Panc1 (cell line): ENCODE measurements at regions of chr9 and their contacts with region 1.

Region 1: GRCh38 chr9:71368157-71368556 is 246.7 kb upstream of the TRPM3 start:
- DNase-seq: no peak
- ATAC-seq: no peak
- H3K4me3 ChIP-seq: no peak overlapping the region
- H3K27ac ChIP-seq: no peak overlapping the region
- H3K4me1 ChIP-seq: no peaks in the 10 kb centered on the region
- H3K27me3 ChIP-seq: no peaks in the 10 kb centered on the region
- CTCF ChIP-seq: no peak

Region 2: GRCh38 chr9:71446473-71447411 is 78.6 kb after region 1 on chr9:
- CTCF ChIA-PET with region 1: no interaction called
- POLR2A ChIA-PET with region 1: no interaction called
- in situ Hi-C with region 1: no loop called
- intact Hi-C with region 1: loop called (anchors 10 kb)
- DNase-seq: no peak
- ATAC-seq: no peak
- H3K4me3 ChIP-seq: no peak overlapping the region; a peak in 1 of 4 replicates
- H3K27ac ChIP-seq: no peak overlapping the region
- H3K4me1 ChIP-seq: no peaks in the 10 kb centered on the region
- H3K27me3 ChIP-seq: no peaks in the 10 kb centered on the region
- CTCF ChIP-seq: no peak